Calu3 (cell line): ENCODE measurements at regions of chr1 and their contacts with region 1.

Region 1: GRCh38 chr1:234212764-234213657 is 160.2 kb upstream of the COA6 start:
- DNase-seq: peak; percentile 33
- H3K4me3 Mint-ChIP-seq: peak overlapping the region; percentile 71
- H3K27ac Mint-ChIP-seq: no peak overlapping the region
- H3K4me1 Mint-ChIP-seq: no peaks in the 10 kb centered on the region
- H3K27me3 Mint-ChIP-seq: peaks cover 69% of the 10 kb centered on the region
- CTCF ChIP-seq: no peak

Region 2: GRCh38 chr1:234154320-234155251 is 58.4 kb before region 1 on chr1:
- CTCF ChIA-PET with region 1: no interaction called
- intact Hi-C with region 1: loop called (anchors 2 kb)
- DNase-seq: peak; percentile 47
- H3K4me3 Mint-ChIP-seq: no peak overlapping the region
- H3K27ac Mint-ChIP-seq: no peak overlapping the region
- H3K4me1 Mint-ChIP-seq: no peaks in the 10 kb centered on the region
- H3K27me3 Mint-ChIP-seq: no peaks in the 10 kb centered on the region
- CTCF ChIP-seq: peak; percentile 84

Region 3: DNA sequence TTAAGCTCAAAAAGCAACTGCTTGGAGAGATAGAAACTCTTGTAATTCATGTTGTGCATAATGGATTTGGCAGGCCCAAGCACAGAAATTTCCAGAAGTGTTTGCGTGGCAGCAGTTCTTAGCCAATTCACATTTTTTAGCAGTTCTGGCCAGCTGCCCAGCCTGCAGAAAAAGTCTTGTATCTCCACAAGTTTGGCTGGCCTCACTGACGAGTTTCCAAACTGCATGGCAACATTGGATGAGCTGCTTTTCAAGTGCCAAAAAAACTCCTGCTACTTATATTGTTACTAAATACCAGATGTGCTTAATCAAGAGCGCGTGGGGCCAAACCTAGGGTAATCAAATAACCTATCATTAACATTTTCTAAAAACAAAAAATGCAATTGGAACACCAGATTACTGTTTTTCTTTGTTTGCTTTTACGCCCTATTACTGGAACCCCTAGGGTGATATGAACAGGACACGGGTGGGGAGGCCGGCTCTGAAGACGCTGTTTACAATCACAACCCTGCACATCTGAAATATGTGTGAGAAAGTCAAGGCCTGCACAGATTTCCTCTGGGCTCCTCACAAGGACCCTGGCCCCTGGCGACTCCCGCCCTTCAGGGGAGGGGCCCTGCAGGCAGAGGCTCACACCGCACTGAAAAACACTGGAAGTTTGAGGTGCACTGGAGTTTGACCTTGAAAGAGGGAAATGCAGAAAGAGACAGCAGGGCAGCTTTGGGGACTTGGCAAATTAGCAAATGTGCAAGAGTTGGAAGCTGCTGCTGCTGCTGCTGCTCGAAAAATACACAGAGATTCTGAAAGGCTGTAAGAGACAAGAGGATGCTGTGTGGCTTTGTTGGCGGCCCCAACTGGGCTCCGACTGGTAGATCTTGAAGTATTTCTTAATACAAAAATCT is 321.2 kb after region 1 on chr1:
- CTCF ChIA-PET with region 1: no interaction called
- intact Hi-C with region 1: no loop called
- DNase-seq: no peak
- H3K4me3 Mint-ChIP-seq: no peak overlapping the region
- H3K27ac Mint-ChIP-seq: no peak overlapping the region
- H3K4me1 Mint-ChIP-seq: peaks cover 18% of the 10 kb centered on the region
- H3K27me3 Mint-ChIP-seq: no peaks in the 10 kb centered on the region
- CTCF ChIP-seq: no peak